ENCODE measurements at regions of chr16 and their contacts with region 1.

Region 1: DNA sequence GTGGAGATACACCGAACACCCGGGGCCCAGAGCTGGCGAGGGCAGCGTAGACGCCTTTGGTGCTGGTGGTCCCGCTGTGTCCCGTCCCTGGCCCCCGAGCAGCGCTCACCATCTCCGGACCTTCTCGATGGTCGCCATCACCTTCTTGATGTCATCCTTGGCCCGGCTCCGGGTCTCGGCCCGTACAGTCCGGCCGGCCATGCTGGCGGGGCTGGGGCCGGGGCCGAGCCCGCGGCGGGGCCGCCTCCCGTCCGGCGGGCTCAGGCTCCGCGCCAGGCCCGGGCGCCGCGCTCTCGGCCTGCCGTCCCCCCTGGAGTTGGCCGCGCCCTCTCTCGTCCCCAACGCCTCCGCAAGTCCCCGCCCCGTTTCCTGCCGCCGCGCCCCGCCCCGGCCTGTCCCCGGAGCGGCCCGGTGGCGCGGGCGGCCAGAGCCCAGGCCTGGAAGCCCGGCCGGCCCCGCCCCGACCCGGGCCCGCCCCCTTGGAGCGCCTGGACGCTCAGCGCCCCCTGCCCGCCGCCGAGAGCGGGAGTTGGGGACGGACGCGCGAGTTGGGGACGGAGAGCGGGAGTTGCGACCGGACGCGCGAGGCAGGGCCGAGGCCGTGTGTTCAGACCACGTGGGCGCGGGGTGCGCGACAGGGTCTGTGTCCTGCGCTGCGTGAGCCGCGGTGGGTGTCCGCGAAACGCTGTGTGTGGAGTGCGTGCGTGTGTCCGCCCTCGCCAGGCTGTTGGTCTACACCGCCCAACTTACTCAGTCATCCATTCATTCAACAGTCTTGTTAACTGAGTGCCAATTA is at the start of gene BCL7C:
- DNase-seq: peak; percentile 88
- H3K4me3 Mint-ChIP-seq: peak within 1 kb of the TSS; percentile 75
- H3K27ac Mint-ChIP-seq: peak within 1 kb of the TSS; percentile 80
- H3K4me1 Mint-ChIP-seq: peaks cover 31% of the 10 kb centered on the region
- H3K27me3 Mint-ChIP-seq: no peaks in the 10 kb centered on the region
- CTCF ChIP-seq: peak; percentile 43
- total RNA-seq, gene BCL7C: 32.0 and 33.9 TPM in 2 replicates

Region 2: DNA sequence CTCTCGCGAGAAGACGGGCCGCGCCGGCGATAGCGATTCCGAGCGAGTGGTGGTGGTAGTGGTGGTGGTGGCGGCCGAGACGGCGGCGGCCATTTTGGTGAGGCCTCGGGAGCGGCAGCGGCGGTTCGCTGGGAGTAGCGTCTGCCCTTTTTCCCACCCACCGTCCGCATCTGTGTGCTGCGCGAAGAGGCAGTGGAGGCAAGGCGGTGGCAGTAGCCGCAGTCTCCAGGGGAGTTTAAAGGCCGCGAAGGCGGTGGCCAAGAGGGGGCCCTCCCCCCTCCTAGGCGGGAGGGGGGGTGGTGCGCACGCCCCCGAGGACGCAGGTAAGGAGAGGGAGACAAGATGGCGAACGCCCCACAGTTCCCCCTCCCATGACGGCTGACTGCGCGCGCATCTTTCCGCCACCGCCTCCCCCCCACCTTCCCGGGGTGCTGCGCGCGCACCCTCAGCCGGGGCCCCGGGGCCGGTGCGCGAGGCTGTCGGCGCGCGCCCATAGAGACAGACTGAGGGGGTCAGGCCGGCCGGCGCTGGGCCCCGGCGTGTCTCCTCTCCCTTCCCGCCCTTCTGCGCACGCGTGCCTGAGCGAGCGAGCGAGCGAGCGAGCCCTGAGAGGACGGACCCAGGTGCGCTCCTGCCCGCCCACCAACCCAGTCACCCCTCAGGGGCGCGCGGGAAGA is 195.7 kb before region 1 on chr16:
- CTCF ChIA-PET with region 1: no interaction called
- POLR2A ChIA-PET with region 1: no interaction called
- intact Hi-C with region 1: loop called (anchors 5 kb)
- DNase-seq: peak; percentile 98
- H3K4me3 Mint-ChIP-seq: peak overlapping the region; percentile 86
- H3K27ac Mint-ChIP-seq: peak overlapping the region; percentile 100
- H3K4me1 Mint-ChIP-seq: peaks cover 14% of the 10 kb centered on the region
- H3K27me3 Mint-ChIP-seq: no peaks in the 10 kb centered on the region
- CTCF ChIP-seq: no peak

Region 3: GRCh38 chr16:30844671-30845449 is 49.1 kb before region 1 on chr16:
- CTCF ChIA-PET with region 1: interaction called, 15 read pairs
- POLR2A ChIA-PET with region 1: interaction called, 6 read pairs
- intact Hi-C with region 1: loop called (anchors 2 kb)
- DNase-seq: peak; percentile 90
- H3K4me3 Mint-ChIP-seq: no peak overlapping the region
- H3K27ac Mint-ChIP-seq: no peak overlapping the region
- H3K4me1 Mint-ChIP-seq: no peaks in the 10 kb centered on the region
- H3K27me3 Mint-ChIP-seq: no peaks in the 10 kb centered on the region
- CTCF ChIP-seq: peak; percentile 83

Region 4: DNA sequence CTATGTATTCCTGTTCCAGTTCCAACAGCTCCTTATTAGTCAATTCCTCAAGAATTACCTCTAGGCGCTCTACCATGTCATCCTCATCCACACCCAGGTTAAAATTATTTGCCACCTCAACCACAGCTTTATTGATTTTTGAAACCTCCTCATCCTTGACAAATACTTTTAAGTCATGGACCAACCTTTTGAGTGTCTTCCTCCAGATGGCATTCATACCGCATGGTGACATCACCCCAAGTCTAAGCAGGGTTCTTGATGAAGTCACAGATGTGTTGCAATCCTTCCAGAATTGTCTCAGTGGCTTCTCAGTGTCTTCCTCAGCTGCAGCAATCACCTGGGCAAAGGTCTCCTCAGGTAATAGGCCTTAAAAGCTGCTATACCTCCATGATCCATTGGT is 40.2 kb before region 1 on chr16:
- CTCF ChIA-PET with region 1: interaction called, 6 read pairs
- POLR2A ChIA-PET with region 1: interaction called, 11 read pairs
- intact Hi-C with region 1: no loop called
- DNase-seq: no peak
- H3K4me3 Mint-ChIP-seq: no peak overlapping the region
- H3K27ac Mint-ChIP-seq: no peak overlapping the region
- H3K4me1 Mint-ChIP-seq: peaks cover 8% of the 10 kb centered on the region
- H3K27me3 Mint-ChIP-seq: no peaks in the 10 kb centered on the region
- CTCF ChIP-seq: no peak

Region 5: DNA sequence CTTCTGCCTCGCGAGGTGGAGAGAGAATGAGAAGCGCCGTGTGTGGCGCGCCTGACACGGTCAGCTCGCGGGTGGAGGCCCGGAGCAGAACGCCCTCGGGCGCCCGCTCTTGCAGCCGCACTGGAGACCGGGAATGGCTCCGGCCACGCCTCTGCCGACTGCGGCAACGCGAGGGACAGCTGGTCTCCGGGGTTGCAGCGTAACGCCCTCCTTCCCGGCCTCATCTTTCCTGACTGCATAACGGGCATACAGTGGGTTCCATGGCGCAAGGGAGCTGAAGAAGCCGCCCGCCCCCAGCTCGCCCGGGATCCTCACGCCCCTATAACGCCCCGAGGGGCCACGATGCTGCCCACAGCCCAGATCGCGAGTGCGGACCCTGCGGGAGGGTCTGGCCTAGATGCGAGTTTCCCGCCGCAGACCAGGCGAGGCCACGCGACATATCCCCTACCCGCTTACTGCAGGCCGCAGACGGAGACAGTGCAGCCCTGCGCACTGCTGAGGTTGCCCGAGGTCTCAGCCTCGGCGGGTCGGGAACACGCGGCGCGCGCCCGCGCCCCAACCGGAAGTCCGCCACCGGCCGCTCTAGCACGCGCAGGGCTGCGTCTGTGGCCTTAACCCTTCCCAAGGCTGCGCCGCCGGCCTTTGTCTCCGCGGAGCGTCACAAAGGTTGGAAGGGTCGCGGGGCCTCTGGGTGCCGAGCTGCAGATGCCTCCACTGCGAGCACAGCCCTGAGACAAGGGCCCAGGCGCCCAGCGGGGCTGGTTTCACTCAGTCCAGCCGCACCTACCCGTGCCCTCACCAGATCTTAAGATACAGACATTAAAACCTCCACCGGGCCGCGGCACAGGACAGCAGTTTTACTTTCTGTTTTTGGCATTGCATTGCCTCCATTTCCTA is 18.9 kb before region 1 on chr16:
- CTCF ChIA-PET with region 1: interaction called, 13 read pairs
- POLR2A ChIA-PET with region 1: interaction called, 36 read pairs
- intact Hi-C with region 1: no loop called
- DNase-seq: peak; percentile 85
- H3K4me3 Mint-ChIP-seq: peak overlapping the region; percentile 91
- H3K27ac Mint-ChIP-seq: peak overlapping the region; percentile 72
- H3K4me1 Mint-ChIP-seq: peaks cover 12% of the 10 kb centered on the region
- H3K27me3 Mint-ChIP-seq: no peaks in the 10 kb centered on the region
- CTCF ChIP-seq: no peak

Region 6: DNA sequence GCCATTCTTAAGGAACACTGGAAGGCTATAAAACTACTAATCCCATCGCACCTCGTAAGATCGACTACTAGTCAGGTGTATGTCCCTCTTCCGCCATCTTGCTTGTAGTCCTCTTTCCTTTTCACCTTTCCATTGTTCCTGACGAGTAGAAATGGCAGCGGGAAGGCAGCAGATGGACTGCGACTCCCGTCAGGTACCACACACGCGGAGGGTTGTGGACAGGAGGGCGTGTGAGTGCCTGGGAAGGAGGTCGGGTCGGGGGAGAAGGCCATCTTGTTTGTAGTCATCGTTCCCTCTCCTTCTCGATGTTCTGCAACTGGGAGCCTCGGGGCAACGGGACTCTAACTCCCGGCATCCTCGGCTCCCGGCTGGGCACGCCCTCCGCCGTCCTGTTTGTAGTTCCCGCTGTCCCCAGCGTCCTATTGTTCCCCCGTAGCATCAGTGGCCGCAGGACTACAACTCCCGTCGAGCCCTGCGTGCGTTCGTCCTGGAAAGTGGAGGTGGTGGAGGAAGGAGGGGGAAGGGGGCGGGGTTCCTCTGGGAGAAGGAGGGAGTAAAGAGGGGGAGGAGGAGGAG is 29.1 kb after region 1 on chr16:
- CTCF ChIA-PET with region 1: interaction called, 3 read pairs
- POLR2A ChIA-PET with region 1: interaction called, 3 read pairs
- intact Hi-C with region 1: loop called (anchors 2 kb)
- DNase-seq: peak; percentile 100
- H3K4me3 Mint-ChIP-seq: peak overlapping the region; percentile 98
- H3K27ac Mint-ChIP-seq: peak overlapping the region; percentile 100
- H3K4me1 Mint-ChIP-seq: peaks cover 14% of the 10 kb centered on the region
- H3K27me3 Mint-ChIP-seq: no peaks in the 10 kb centered on the region
- CTCF ChIP-seq: no peak

Region 7: DNA sequence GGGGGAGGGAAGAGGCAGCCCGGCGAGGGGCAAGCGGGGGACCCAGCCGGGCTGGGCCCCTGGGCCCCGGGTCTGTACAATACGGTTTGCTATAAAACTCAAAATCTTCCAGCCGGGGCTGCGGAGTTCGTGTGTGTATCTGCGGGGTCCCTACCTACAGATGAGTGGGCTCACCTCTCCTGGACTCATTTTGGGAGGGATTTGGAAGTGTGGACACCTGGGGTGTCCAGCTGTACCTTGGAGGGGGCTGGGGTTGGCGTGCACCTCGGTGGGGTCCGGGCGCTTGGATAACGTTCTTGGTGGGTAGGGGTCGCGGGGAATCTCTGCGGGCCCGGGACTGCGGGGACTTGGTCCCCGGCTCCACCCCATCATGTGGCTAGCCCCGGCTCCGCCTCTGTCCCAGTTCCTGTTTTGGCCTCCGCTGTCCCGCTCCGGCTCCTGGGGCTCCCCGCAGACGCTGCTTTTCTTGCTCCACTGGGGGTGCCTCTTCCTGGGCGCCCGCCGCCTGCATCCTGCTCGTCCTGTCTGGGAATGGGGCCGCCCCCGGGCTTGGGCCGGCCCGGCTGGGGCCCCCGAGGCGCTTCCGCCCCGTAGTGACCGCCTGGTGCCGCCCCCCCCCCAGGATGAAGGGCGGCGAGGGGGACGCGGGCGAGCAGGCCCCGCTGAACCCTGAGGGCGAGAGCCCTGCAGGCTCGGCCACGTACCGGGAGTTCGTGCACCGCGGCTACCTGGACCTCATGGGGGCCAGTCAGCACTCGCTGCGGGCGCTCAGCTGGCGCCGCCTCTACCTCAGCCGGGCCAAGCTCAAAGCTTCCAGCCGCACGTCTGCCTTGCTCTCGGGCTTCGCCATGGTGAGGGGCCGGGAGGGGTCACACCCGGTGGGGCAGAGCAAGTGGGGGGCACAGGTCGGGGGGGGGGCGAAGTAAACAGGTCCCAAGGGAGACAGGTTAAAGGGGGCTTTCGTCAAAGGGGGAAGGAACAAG is 55.0 kb after region 1 on chr16 and contains the start of gene ORAI3:
- CTCF ChIA-PET with region 1: no interaction called
- POLR2A ChIA-PET with region 1: interaction called, 10 read pairs
- intact Hi-C with region 1: no loop called
- DNase-seq: peak; percentile 70
- H3K4me3 Mint-ChIP-seq: peak within 1 kb of the TSS; percentile 94
- H3K27ac Mint-ChIP-seq: peak within 1 kb of the TSS; percentile 87
- H3K4me1 Mint-ChIP-seq: no peaks in the 10 kb centered on the region
- H3K27me3 Mint-ChIP-seq: no peaks in the 10 kb centered on the region
- CTCF ChIP-seq: no peak
- total RNA-seq, gene ORAI3: 16.2 and 21.2 TPM in 2 replicates